CD4-positive, alpha-beta T cell (primary cell): ENCODE measurements at regions of chr12 and their contacts with region 1.

Region 1: DNA sequence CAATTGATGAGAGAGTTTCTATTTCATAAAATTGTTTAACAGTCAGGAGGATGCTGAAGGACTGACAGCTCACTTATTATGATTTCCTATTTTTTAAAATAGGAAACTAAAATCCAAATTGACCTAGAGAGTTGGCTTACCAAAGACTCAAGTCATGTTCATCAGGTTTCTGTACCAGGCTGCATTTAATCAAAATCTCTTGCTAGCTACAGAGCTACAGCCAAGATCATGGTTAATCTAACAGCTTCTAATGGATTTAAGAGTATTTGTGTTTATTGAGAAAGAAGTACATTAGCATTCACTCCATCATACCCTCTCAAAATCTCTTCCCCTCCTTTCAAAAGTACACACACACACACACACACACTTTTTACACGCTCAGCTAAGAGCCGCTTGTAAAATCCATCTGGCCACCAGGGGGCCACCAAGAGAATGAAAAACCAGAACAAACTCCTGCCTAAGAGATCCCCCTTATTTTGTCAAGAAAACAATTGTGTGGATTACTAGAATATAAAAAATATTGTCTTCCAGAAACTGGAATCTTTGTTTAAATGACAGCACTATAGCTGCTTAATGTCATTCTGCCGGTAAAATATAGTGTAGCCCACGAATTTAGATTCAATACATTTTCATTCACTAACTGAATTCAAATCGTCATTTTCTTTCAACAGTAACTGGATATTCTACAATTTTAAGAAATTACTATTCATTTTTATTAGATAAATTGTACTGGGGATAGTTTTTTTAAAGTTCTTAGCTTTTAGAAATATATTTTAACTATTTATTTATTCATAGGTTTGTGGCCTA is 334.0 kb downstream of the BTG1 start:
- DNase-seq: peak; percentile 58 to 90 (median 78)
- ATAC-seq: peak; percentile 86
- H3K4me3 ChIP-seq: no peak overlapping the region
- H3K4me3 Mint-ChIP-seq: no peak overlapping the region
- H3K27ac ChIP-seq: no peak overlapping the region
- H3K27ac Mint-ChIP-seq: peak overlapping the region; percentile 64
- H3K4me1 ChIP-seq: peaks cover 2% of the 10 kb centered on the region
- H3K4me1 Mint-ChIP-seq: peaks cover 26% of the 10 kb centered on the region
- H3K27me3 ChIP-seq: no peaks in the 10 kb centered on the region
- H3K27me3 Mint-ChIP-seq: no peaks in the 10 kb centered on the region
- CTCF ChIP-seq: peak; percentile 87

Region 2: GRCh38 chr12:91577586-91578539 is 233.8 kb before region 1 on chr12:
- CTCF ChIA-PET with region 1: interaction called, 7 read pairs
- POLR2A ChIA-PET with region 1: no interaction called
- intact Hi-C with region 1: loop called in 1 of 2 experiments (anchors 10 kb)
- DNase-seq: peak in 3 of 14 experiments; percentile 47 to 57 (median 50)
- ATAC-seq: peak; percentile 82
- H3K4me3 ChIP-seq: peak overlapping the region; percentile 47
- H3K4me3 Mint-ChIP-seq: peak overlapping the region; percentile 76
- H3K27ac ChIP-seq: no peak overlapping the region
- H3K27ac Mint-ChIP-seq: peak overlapping the region; percentile 28
- H3K4me1 ChIP-seq: no peaks in the 10 kb centered on the region
- H3K4me1 Mint-ChIP-seq: peaks cover 15% of the 10 kb centered on the region
- H3K27me3 ChIP-seq: no peaks in the 10 kb centered on the region
- H3K27me3 Mint-ChIP-seq: no peaks in the 10 kb centered on the region
- CTCF ChIP-seq: peak; percentile 85

Region 3: GRCh38 chr12:91871751-91872150 is 60.1 kb after region 1 on chr12:
- CTCF ChIA-PET with region 1: interaction called, 28 read pairs
- POLR2A ChIA-PET with region 1: interaction called, 33 read pairs
- intact Hi-C with region 1: loop called in 1 of 2 experiments (anchors 2 kb)
- DNase-seq: peak in 2 of 14 experiments; percentile 40 to 44
- ATAC-seq: no peak
- H3K4me3 ChIP-seq: no peak overlapping the region
- H3K4me3 Mint-ChIP-seq: peak overlapping the region; percentile 11
- H3K27ac ChIP-seq: peak overlapping the region; percentile 58 to 68
- H3K27ac Mint-ChIP-seq: peak overlapping the region; percentile 77
- H3K4me1 ChIP-seq: peaks cover 43% of the 10 kb centered on the region
- H3K4me1 Mint-ChIP-seq: peaks cover 71% of the 10 kb centered on the region
- H3K27me3 ChIP-seq: no peaks in the 10 kb centered on the region
- H3K27me3 Mint-ChIP-seq: no peaks in the 10 kb centered on the region
- CTCF ChIP-seq: no peak

Region 4: GRCh38 chr12:91958816-91959215 is 147.1 kb after region 1 on chr12:
- CTCF ChIA-PET with region 1: no interaction called
- POLR2A ChIA-PET with region 1: no interaction called
- intact Hi-C with region 1: no loop called
- DNase-seq: no peak
- ATAC-seq: no peak
- H3K4me3 ChIP-seq: no peak overlapping the region
- H3K4me3 Mint-ChIP-seq: no peak overlapping the region
- H3K27ac ChIP-seq: no peak overlapping the region
- H3K27ac Mint-ChIP-seq: no peak overlapping the region
- H3K4me1 ChIP-seq: no peaks in the 10 kb centered on the region
- H3K4me1 Mint-ChIP-seq: no peaks in the 10 kb centered on the region
- H3K27me3 ChIP-seq: no peaks in the 10 kb centered on the region
- H3K27me3 Mint-ChIP-seq: no peaks in the 10 kb centered on the region
- CTCF ChIP-seq: no peak

Region 5: DNA sequence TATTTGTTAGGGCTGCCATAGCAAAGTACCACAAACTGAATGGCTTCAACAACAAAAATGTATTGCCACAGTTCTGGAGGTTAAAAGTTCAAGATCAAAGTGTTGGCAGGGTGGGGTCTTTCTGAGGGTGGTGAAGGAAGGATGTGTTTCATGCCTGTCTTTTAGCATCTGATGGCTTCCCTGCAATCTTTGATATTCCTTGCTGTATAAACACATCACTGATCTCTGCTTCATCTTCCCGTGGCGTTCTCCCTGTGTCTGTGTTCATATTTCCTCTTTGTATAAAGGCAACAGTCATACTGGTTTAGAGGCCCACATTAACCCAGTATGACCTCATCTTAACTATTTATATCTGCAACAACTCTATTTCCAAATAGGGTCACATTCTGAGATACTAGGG is 166.5 kb after region 1 on chr12:
- CTCF ChIA-PET with region 1: no interaction called
- POLR2A ChIA-PET with region 1: no interaction called
- intact Hi-C with region 1: loop called in 1 of 2 experiments (anchors 10 kb)
- DNase-seq: peak in 12 of 14 experiments; percentile 8 to 85 (median 44)
- ATAC-seq: peak; percentile 88
- H3K4me3 ChIP-seq: no peak overlapping the region
- H3K4me3 Mint-ChIP-seq: peak overlapping the region; percentile 3
- H3K27ac ChIP-seq: peak overlapping the region; percentile 2 to 52
- H3K27ac Mint-ChIP-seq: peak overlapping the region; percentile 79
- H3K4me1 ChIP-seq: peaks cover 24% of the 10 kb centered on the region
- H3K4me1 Mint-ChIP-seq: peaks cover 55% of the 10 kb centered on the region
- H3K27me3 ChIP-seq: no peaks in the 10 kb centered on the region
- H3K27me3 Mint-ChIP-seq: no peaks in the 10 kb centered on the region
- CTCF ChIP-seq: no peak

Region 6: DNA sequence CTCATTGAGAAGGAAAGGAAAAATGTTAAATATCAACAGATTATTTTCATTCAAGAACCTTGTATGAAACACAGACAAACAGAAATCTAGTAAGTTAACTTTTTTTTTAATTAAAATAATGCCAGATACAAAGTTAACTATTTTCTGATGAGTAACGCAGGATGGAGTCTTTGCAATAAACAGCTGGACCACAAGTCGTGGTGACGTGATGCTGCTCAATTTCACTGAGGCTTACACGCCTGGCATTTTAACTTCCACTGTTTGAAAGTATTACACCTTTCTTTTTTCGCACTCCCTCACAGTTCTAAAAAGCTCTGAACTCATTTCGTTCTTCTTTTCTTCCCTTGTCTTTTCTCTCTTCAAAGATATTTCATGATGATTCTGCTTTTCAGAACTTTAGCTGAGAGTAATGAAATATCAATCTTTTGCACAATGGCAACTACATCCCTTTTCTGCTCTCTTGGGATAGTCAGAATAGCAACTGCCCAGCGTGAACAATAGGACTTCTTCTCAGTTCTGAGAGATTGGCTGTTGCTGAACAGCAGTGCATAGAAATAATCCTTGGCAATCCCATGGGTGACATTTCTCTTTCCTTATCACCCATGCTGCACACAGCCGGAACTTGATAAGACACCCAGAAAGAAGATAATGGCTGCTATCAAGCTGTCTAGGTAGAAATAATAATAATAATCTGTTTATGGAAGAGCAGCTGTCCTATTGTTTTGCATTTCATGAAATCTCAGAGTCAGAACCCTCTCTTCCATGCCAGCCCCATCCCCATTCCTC is 173.5 kb after region 1 on chr12:
- CTCF ChIA-PET with region 1: interaction called, 5 read pairs
- POLR2A ChIA-PET with region 1: no interaction called
- intact Hi-C with region 1: loop called in 1 of 2 experiments (anchors 5 kb)
- DNase-seq: no peak
- ATAC-seq: no peak
- H3K4me3 ChIP-seq: no peak overlapping the region
- H3K4me3 Mint-ChIP-seq: no peak overlapping the region
- H3K27ac ChIP-seq: no peak overlapping the region
- H3K27ac Mint-ChIP-seq: no peak overlapping the region
- H3K4me1 ChIP-seq: peaks cover 3% of the 10 kb centered on the region
- H3K4me1 Mint-ChIP-seq: peaks cover 73% of the 10 kb centered on the region
- H3K27me3 ChIP-seq: no peaks in the 10 kb centered on the region
- H3K27me3 Mint-ChIP-seq: no peaks in the 10 kb centered on the region
- CTCF ChIP-seq: no peak